Ovary (tissue), 10 donors: ENCODE measurements at regions of chr10 and their contacts with region 1.

Region 1: DNA sequence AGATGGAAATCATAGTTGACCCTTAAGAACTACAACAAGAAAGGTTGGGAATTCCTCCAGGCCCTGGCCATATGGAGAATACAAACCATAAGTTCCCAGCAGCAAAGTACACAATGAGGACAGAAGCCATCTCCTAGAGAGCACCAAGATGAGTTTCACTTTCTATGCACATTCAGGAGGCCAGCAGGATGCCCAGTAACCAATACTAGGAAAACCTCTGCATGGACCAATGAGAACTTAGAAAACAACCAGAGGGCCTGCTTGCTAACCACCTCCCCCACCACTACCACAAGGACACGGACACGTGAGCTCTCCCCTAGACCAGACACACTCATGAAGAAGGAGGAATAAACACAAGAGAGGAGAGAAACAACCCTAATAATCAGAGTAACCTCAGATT is 56.3 kb downstream of the IFIT5 start:
- DNase-seq: no peak
- H3K4me3 ChIP-seq: no peak overlapping the region
- H3K27ac ChIP-seq: no peak overlapping the region
- H3K4me1 ChIP-seq: peaks cover 3% of the 10 kb centered on the region
- H3K27me3 ChIP-seq: no peaks in the 10 kb centered on the region
- CTCF ChIP-seq: no peak
- EP300 ChIP-seq: no peak
- POLR2A ChIP-seq: no peak

Region 2: DNA sequence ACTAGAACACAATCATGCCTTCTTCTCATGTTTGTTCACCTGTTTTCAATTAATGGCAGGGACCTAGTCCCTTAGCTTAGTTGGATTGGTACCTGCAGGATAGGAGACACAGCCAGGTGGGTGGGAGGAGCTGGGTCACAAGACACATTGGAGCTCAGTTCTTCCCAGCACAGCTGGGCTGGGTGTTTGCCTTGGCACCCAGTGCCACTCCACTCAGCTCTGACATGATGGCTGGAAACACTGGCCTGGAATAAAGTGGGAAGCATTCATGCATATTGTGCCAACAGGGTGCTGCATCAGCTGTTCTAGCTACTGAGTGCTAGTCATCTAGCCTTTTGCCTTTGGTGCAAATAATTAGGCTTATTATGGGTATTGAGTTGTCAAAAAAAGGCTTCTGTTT is 1381.1 kb before region 1 on chr10:
- intact Hi-C with region 1: loop called in 1 of 4 experiments (anchors 5 kb)
- DNase-seq: no peak
- H3K4me3 ChIP-seq: no peak overlapping the region
- H3K27ac ChIP-seq: no peak overlapping the region
- H3K4me1 ChIP-seq: no peaks in the 10 kb centered on the region
- H3K27me3 ChIP-seq: no peaks in the 10 kb centered on the region
- CTCF ChIP-seq: no peak
- EP300 ChIP-seq: no peak
- POLR2A ChIP-seq: no peak

Region 3: DNA sequence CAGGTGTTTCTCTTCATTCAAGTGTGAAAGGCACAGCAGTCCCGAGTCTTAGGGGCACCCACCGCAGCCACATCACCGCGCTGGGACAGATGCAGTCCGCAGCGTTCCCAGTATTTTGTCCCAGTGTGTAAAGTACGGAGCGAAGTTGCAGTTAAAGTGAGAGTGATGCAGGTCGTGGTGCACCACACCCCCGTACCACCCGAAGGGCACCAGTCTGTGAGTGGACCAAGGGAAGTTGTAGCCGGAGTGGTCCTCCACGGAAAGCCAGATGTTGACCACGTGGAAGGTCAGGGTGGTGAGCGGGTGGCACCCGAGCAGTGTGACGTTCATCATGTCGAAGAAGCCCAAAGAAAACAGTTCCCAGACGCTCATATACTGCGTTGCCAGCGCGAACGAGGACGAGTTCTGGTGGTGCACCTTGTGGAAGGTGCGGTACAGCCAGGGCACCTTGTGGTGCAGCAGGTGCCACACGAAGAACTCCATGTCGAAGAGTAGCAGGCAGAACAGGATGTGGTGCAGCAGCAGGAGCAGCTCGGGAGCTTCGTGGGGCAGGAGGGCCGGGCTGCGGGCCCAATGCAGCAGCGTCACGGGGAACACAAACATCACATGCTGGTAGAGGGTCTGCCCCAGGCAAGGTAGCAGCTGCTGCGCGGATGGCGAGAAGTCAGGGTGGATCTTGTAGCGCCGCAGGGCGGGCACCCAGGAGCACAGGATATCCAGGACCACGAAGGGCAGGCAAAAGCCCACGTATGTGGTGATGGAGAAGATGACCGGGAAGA is 264.0 kb before region 1 on chr10:
- intact Hi-C with region 1: no loop called
- DNase-seq: peak; percentile 40 to 66 (median 54)
- H3K4me3 ChIP-seq: peak overlapping the region; percentile 47
- H3K27ac ChIP-seq: peak overlapping the region; percentile 16 to 34
- H3K4me1 ChIP-seq: peaks cover 2% of the 10 kb centered on the region
- H3K27me3 ChIP-seq: no peaks in the 10 kb centered on the region
- CTCF ChIP-seq: no peak
- EP300 ChIP-seq: no peak
- POLR2A ChIP-seq: no peak

Region 4: GRCh38 chr10:89426230-89426868 is 44.3 kb before region 1 on chr10:
- intact Hi-C with region 1: no loop called
- DNase-seq: peak in 1 of 5 donors; percentile 38
- H3K4me3 ChIP-seq: no peak overlapping the region
- H3K27ac ChIP-seq: no peak overlapping the region
- H3K4me1 ChIP-seq: no peaks in the 10 kb centered on the region
- H3K27me3 ChIP-seq: no peaks in the 10 kb centered on the region
- CTCF ChIP-seq: peak; percentile 26 to 78 (median 75)
- EP300 ChIP-seq: no peak
- POLR2A ChIP-seq: no peak